CD8-positive, alpha-beta T cell (primary cell): ENCODE measurements at regions of chr4 and their contacts with region 1.

Region 1: DNA sequence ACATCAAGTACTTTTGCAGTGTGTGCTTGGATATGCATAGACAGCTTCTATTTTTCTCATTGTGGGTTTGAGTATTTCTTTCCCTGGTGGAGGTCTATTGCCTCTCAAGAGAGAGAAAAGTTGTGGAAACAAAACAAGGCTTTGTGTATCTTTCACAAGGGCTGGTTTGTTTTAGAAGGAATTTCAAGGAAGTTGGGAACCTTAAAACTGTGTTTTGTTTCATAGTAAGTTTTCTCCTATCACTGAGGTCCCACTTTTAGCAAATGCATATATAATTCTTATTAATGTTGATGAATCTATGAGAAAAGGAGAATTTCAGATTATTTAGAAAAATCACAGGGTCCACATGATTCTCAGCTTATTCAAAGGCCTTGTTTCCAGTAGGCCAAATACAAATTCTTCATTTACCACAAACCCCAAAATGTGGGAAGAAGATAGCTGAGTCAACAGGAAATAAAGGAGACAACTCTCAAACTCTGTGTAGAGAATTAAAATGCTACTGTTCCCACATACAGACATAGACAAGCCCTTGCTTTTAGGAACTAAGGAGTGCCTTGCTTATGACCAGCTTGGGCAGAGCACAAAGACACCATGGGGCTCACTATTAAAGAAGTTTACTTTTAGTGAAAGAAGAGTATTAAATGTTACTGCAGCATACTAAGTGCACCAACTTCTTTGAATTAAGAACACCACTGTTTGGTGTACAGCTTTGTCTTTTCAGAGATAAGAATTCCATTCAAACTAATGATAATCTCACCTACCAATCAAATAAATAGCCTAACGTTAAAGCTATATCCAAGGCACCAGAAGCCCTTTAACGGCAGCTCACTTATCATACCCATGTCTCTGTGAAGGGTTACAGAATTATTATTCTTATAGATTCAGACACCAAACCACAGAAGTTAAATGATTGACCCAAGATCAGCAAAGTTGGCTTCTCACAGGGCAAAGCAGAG is 177.4 kb upstream of the LEF1 start:
- DNase-seq: no peak
- ATAC-seq: no peak
- H3K4me3 ChIP-seq: no peak overlapping the region
- H3K4me3 Mint-ChIP-seq: no peak overlapping the region
- H3K27ac ChIP-seq: no peak overlapping the region
- H3K27ac Mint-ChIP-seq: peak overlapping the region; percentile 19
- H3K4me1 ChIP-seq: peaks cover 24% of the 10 kb centered on the region
- H3K4me1 Mint-ChIP-seq: peaks cover 46% of the 10 kb centered on the region
- H3K27me3 ChIP-seq: no peaks in the 10 kb centered on the region
- H3K27me3 Mint-ChIP-seq: no peaks in the 10 kb centered on the region
- CTCF ChIP-seq: no peak

Region 2: GRCh38 chr4:108247387-108248049 is 98.6 kb before region 1 on chr4:
- CTCF ChIA-PET with region 1: no interaction called
- POLR2A ChIA-PET with region 1: no interaction called
- intact Hi-C with region 1: no loop called
- DNase-seq: no peak
- ATAC-seq: no peak
- H3K4me3 ChIP-seq: no peak overlapping the region
- H3K4me3 Mint-ChIP-seq: no peak overlapping the region
- H3K27ac ChIP-seq: no peak overlapping the region
- H3K27ac Mint-ChIP-seq: no peak overlapping the region
- H3K4me1 ChIP-seq: peaks cover 3% of the 10 kb centered on the region
- H3K4me1 Mint-ChIP-seq: peaks cover 12% of the 10 kb centered on the region
- H3K27me3 ChIP-seq: no peaks in the 10 kb centered on the region
- H3K27me3 Mint-ChIP-seq: no peaks in the 10 kb centered on the region
- CTCF ChIP-seq: no peak

Region 3: GRCh38 chr4:108297605-108298004 is 48.5 kb before region 1 on chr4:
- CTCF ChIA-PET with region 1: no interaction called
- POLR2A ChIA-PET with region 1: no interaction called
- intact Hi-C with region 1: loop called in 1 of 2 experiments (anchors 2 kb)
- DNase-seq: no peak
- ATAC-seq: no peak
- H3K4me3 ChIP-seq: no peak overlapping the region
- H3K4me3 Mint-ChIP-seq: no peak overlapping the region
- H3K27ac ChIP-seq: no peak overlapping the region
- H3K27ac Mint-ChIP-seq: no peak overlapping the region
- H3K4me1 ChIP-seq: peaks cover 15% of the 10 kb centered on the region
- H3K4me1 Mint-ChIP-seq: peaks cover 10% of the 10 kb centered on the region
- H3K27me3 ChIP-seq: no peaks in the 10 kb centered on the region
- H3K27me3 Mint-ChIP-seq: no peaks in the 10 kb centered on the region
- CTCF ChIP-seq: no peak